Heart left ventricle (tissue), 16 donors: ENCODE measurements at regions of chr10 and their contacts with region 1.

Region 1: GRCh38 chr10:44857363-44858016 is 53.6 kb upstream of the TMEM72 start:
- DNase-seq: peak; percentile 77 to 86 (median 81)
- ATAC-seq: peak; percentile 70 to 90 (median 83)
- H3K4me3 ChIP-seq: no peak overlapping the region
- H3K27ac ChIP-seq: no peak overlapping the region
- H3K4me1 ChIP-seq: peaks cover 0 to 19% (median 2%) of the 10 kb centered on the region in 12 donors
- H3K27me3 ChIP-seq: no peaks in the 10 kb centered on the region
- CTCF ChIP-seq: peak; percentile 96 to 100 (median 98)
- POLR2A ChIP-seq: no peak

Region 2: GRCh38 chr10:43671656-43672531 is 1185.6 kb before region 1 on chr10:
- intact Hi-C with region 1: loop called in 6 of 10 experiments (anchors 2 to 5 kb)
- DNase-seq: peak in 3 of 5 donors; percentile 52 to 64 (median 52)
- ATAC-seq: peak; percentile 67 to 76 (median 69)
- H3K4me3 ChIP-seq: no peak overlapping the region
- H3K27ac ChIP-seq: no peak overlapping the region
- H3K4me1 ChIP-seq: peaks cover 0 to 20% (median 8%) of the 10 kb centered on the region in 12 donors
- H3K27me3 ChIP-seq: peaks cover 0 to 17% (median 11%) of the 10 kb centered on the region in 9 donors
- CTCF ChIP-seq: peak; percentile 71 to 89 (median 80)
- POLR2A ChIP-seq: no peak

Region 3: DNA sequence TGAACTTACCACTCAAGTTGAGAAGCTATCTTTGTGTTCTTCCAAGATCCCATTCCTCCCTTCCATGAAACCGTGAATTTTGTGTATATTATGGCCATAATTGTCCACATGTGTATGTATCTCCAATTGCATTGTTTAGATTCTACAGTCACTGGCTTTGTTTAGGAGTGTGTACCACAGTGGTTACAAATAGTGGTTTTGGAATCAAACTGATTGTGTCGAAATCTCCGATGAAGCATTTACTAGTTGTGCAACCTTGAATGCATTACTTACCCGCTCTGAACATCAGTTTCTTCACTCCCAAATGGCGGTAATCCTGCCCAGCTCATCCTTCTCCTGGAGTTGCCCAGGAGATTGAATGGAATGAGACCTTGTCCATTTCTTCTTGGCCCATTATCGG is 1063.8 kb before region 1 on chr10:
- intact Hi-C with region 1: loop called in 1 of 10 experiments (anchors 10 kb)
- DNase-seq: no peak
- ATAC-seq: no peak
- H3K4me3 ChIP-seq: no peak overlapping the region
- H3K27ac ChIP-seq: no peak overlapping the region
- H3K4me1 ChIP-seq: peaks cover 0 to 12% (median 0%) of the 10 kb centered on the region in 12 donors
- H3K27me3 ChIP-seq: no peaks in the 10 kb centered on the region
- CTCF ChIP-seq: no peak
- POLR2A ChIP-seq: no peak

Region 4: GRCh38 chr10:44398747-44399658 is 458.5 kb before region 1 on chr10:
- intact Hi-C with region 1: loop called in 2 of 10 experiments (anchors 5 kb)
- DNase-seq: no peak
- ATAC-seq: no peak
- H3K4me3 ChIP-seq: no peak overlapping the region
- H3K27ac ChIP-seq: no peak overlapping the region
- H3K4me1 ChIP-seq: peaks cover 0 to 6% (median 0%) of the 10 kb centered on the region in 12 donors
- H3K27me3 ChIP-seq: no peaks in the 10 kb centered on the region
- CTCF ChIP-seq: no peak
- POLR2A ChIP-seq: no peak

Region 5: GRCh38 chr10:44674536-44675386 is 182.7 kb before region 1 on chr10:
- intact Hi-C with region 1: loop called in 1 of 10 experiments (anchors 5 kb)
- DNase-seq: no peak
- ATAC-seq: no peak
- H3K4me3 ChIP-seq: no peak overlapping the region
- H3K27ac ChIP-seq: no peak overlapping the region
- H3K4me1 ChIP-seq: peaks cover 0 to 12% (median 0%) of the 10 kb centered on the region in 12 donors
- H3K27me3 ChIP-seq: no peaks in the 10 kb centered on the region
- CTCF ChIP-seq: no peak
- POLR2A ChIP-seq: no peak

Region 6: GRCh38 chr10:44733501-44734488 is 123.7 kb before region 1 on chr10:
- intact Hi-C with region 1: loop called in 1 of 10 experiments (anchors 10 kb)
- DNase-seq: no peak
- ATAC-seq: no peak
- H3K4me3 ChIP-seq: no peak overlapping the region
- H3K27ac ChIP-seq: no peak overlapping the region
- H3K4me1 ChIP-seq: no peaks in the 10 kb centered on the region
- H3K27me3 ChIP-seq: no peaks in the 10 kb centered on the region
- CTCF ChIP-seq: peak in 2 of 12 donors; percentile 17 to 23
- POLR2A ChIP-seq: no peak

Region 7: GRCh38 chr10:45015590-45015989 is 158.1 kb after region 1 on chr10:
- intact Hi-C with region 1: no loop called
- DNase-seq: no peak
- ATAC-seq: no peak
- H3K4me3 ChIP-seq: no peak overlapping the region
- H3K27ac ChIP-seq: no peak overlapping the region
- H3K4me1 ChIP-seq: no peaks in the 10 kb centered on the region
- H3K27me3 ChIP-seq: no peaks in the 10 kb centered on the region
- CTCF ChIP-seq: no peak
- POLR2A ChIP-seq: no peak

Region 8: GRCh38 chr10:45198596-45199379 is 341.3 kb after region 1 on chr10:
- intact Hi-C with region 1: no loop called
- DNase-seq: peak in 1 of 5 donors; percentile 61
- ATAC-seq: peak in 1 of 4 donors; percentile 36
- H3K4me3 ChIP-seq: peak overlapping the region in 3 of 12 donors; percentile 17 to 26 (median 24)
- H3K27ac ChIP-seq: no peak overlapping the region
- H3K4me1 ChIP-seq: no peaks in the 10 kb centered on the region
- H3K27me3 ChIP-seq: peaks cover 0 to 29% (median 6%) of the 10 kb centered on the region in 9 donors
- CTCF ChIP-seq: no peak
- POLR2A ChIP-seq: no peak